ENCODE measurements at regions of chr17 and their contacts with region 1.

Region 1: GRCh38 chr17:37791447-37792399 is 46.9 kb upstream of the HNF1B start:
- DNase-seq: peak; percentile 80
- ATAC-seq: peak; percentile 91
- H3K4me3 Mint-ChIP-seq: no peak overlapping the region
- H3K27ac Mint-ChIP-seq: no peak overlapping the region
- H3K4me1 Mint-ChIP-seq: peaks cover 2% of the 10 kb centered on the region
- H3K27me3 Mint-ChIP-seq: peaks cover 33% of the 10 kb centered on the region
- CTCF ChIP-seq: peak; percentile 81

Region 2: GRCh38 chr17:37527249-37527851 is 264.4 kb before region 1 on chr17:
- CTCF ChIA-PET with region 1: interaction called, 16 read pairs
- POLR2A ChIA-PET with region 1: no interaction called
- intact Hi-C with region 1: loop called (anchors 10 kb)
- DNase-seq: peak; percentile 32
- ATAC-seq: peak; percentile 90
- H3K4me3 Mint-ChIP-seq: no peak overlapping the region
- H3K27ac Mint-ChIP-seq: no peak overlapping the region
- H3K4me1 Mint-ChIP-seq: peaks cover 7% of the 10 kb centered on the region
- H3K27me3 Mint-ChIP-seq: no peaks in the 10 kb centered on the region
- CTCF ChIP-seq: peak; percentile 74

Region 3: GRCh38 chr17:37650419-37651003 is 141.2 kb before region 1 on chr17:
- CTCF ChIA-PET with region 1: interaction called, 15 read pairs
- POLR2A ChIA-PET with region 1: no interaction called
- intact Hi-C with region 1: no loop called
- DNase-seq: peak; percentile 17
- ATAC-seq: no peak
- H3K4me3 Mint-ChIP-seq: no peak overlapping the region
- H3K27ac Mint-ChIP-seq: no peak overlapping the region
- H3K4me1 Mint-ChIP-seq: no peaks in the 10 kb centered on the region
- H3K27me3 Mint-ChIP-seq: peaks cover 31% of the 10 kb centered on the region
- CTCF ChIP-seq: peak; percentile 51

Region 4: DNA sequence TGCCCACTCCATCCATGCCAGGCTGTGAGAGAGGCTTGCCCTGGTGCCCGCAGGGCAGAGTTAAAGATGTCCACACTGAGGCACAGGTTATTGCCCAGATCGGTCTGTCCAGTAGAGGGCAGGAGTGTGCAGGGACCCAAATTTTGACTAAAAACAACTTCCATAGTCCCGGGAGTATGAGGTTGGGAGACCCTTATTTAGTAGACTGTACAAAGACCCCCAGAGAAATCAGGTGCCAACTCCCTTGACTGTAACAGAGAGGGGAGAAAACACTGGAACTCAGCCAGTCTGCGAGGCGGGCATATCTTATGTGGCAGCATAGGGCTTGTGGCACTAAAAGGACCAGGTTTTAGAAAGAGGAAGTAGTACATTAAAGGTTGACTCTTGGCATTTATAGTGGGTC is 90.2 kb before region 1 on chr17:
- CTCF ChIA-PET with region 1: interaction called, 40 read pairs
- POLR2A ChIA-PET with region 1: no interaction called
- intact Hi-C with region 1: loop called (anchors 2 kb)
- DNase-seq: peak; percentile 74
- ATAC-seq: peak; percentile 51
- H3K4me3 Mint-ChIP-seq: no peak overlapping the region
- H3K27ac Mint-ChIP-seq: no peak overlapping the region
- H3K4me1 Mint-ChIP-seq: peaks cover 36% of the 10 kb centered on the region
- H3K27me3 Mint-ChIP-seq: peaks cover 13% of the 10 kb centered on the region
- CTCF ChIP-seq: peak; percentile 78

Region 5: GRCh38 chr17:37737081-37737480 is 54.6 kb before region 1 on chr17:
- CTCF ChIA-PET with region 1: interaction called, 11 read pairs
- POLR2A ChIA-PET with region 1: interaction called, 4 read pairs
- intact Hi-C with region 1: no loop called
- DNase-seq: no peak
- ATAC-seq: no peak
- H3K4me3 Mint-ChIP-seq: no peak overlapping the region
- H3K27ac Mint-ChIP-seq: no peak overlapping the region
- H3K4me1 Mint-ChIP-seq: peaks cover 4% of the 10 kb centered on the region
- H3K27me3 Mint-ChIP-seq: peaks cover 42% of the 10 kb centered on the region
- CTCF ChIP-seq: no peak

Region 6: GRCh38 chr17:37816950-37817349 is 25.2 kb after region 1 on chr17:
- CTCF ChIA-PET with region 1: interaction called, 10 read pairs
- POLR2A ChIA-PET with region 1: no interaction called
- intact Hi-C with region 1: no loop called
- DNase-seq: no peak
- ATAC-seq: no peak
- H3K4me3 Mint-ChIP-seq: no peak overlapping the region
- H3K27ac Mint-ChIP-seq: no peak overlapping the region
- H3K4me1 Mint-ChIP-seq: peaks cover 12% of the 10 kb centered on the region
- H3K27me3 Mint-ChIP-seq: peaks cover 15% of the 10 kb centered on the region
- CTCF ChIP-seq: no peak